ENCODE measurements at regions of chr15 and their contacts with region 1.

Region 1: GRCh38 chr15:94910166-94910565 is 678.8 kb downstream of the MCTP2 start:
- DNase-seq: no peak

Region 2: GRCh38 chr15:94858011-94858740 is 52.0 kb before region 1 on chr15:
- intact Hi-C with region 1: loop called (anchors 10 kb)
- DNase-seq: no peak

Measured in cardiac septum (tissue), 1 donor.